ENCODE measurements at regions of chr18 and their contacts with region 1.

Region 1: GRCh38 chr18:60943297-60943696 is 389.9 kb upstream of the CDH20 start:
- DNase-seq: no peak
- ATAC-seq: no peak
- H3K4me3 ChIP-seq: peak overlapping the region in 1 of 2 experiments; percentile 10; a peak in 2 of 4 replicates
- H3K27ac ChIP-seq: no peak overlapping the region
- H3K4me1 ChIP-seq: no peaks in the 10 kb centered on the region
- H3K27me3 ChIP-seq: no peaks in the 10 kb centered on the region
- CTCF ChIP-seq: no peak

Region 2: GRCh38 chr18:60846396-60846795 is 96.9 kb before region 1 on chr18:
- CTCF ChIA-PET with region 1: no interaction called
- POLR2A ChIA-PET with region 1: no interaction called
- in situ Hi-C with region 1: no loop called
- intact Hi-C with region 1: no loop called
- DNase-seq: no peak
- ATAC-seq: no peak
- H3K4me3 ChIP-seq: no peak overlapping the region
- H3K27ac ChIP-seq: no peak overlapping the region
- H3K4me1 ChIP-seq: no peaks in the 10 kb centered on the region
- H3K27me3 ChIP-seq: no peaks in the 10 kb centered on the region
- CTCF ChIP-seq: no peak

Region 3: GRCh38 chr18:60892850-60893249 is 50.4 kb before region 1 on chr18:
- CTCF ChIA-PET with region 1: no interaction called
- POLR2A ChIA-PET with region 1: no interaction called
- in situ Hi-C with region 1: no loop called
- intact Hi-C with region 1: loop called (anchors 10 kb)
- DNase-seq: no peak
- ATAC-seq: no peak
- H3K4me3 ChIP-seq: no peak overlapping the region
- H3K27ac ChIP-seq: no peak overlapping the region
- H3K4me1 ChIP-seq: no peaks in the 10 kb centered on the region
- H3K27me3 ChIP-seq: no peaks in the 10 kb centered on the region
- CTCF ChIP-seq: no peak

Region 4: DNA sequence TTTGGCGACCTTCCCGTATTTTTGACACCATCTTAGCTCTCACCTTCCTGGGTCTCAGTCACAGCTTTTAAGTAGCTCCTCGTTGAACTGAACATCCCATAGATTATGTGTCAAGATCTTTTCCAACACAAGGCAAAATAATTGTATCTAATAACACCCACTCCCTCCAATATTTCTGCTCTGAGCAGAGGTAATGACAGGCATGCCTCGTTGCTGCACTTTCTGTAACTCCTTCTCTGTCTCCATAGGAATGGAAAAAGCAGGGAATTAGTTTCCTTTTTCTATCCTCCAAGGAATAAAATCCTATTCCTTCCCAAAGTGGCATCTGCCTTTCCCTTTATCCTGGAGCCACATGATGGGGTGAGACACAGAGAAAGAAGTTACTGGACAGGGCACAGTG is 215.9 kb after region 1 on chr18:
- CTCF ChIA-PET with region 1: no interaction called
- POLR2A ChIA-PET with region 1: interaction called, 10 read pairs
- in situ Hi-C with region 1: no loop called
- intact Hi-C with region 1: no loop called
- DNase-seq: no peak
- ATAC-seq: no peak
- H3K4me3 ChIP-seq: no peak overlapping the region
- H3K27ac ChIP-seq: no peak overlapping the region
- H3K4me1 ChIP-seq: no peaks in the 10 kb centered on the region
- H3K27me3 ChIP-seq: no peaks in the 10 kb centered on the region
- CTCF ChIP-seq: no peak

Region 5: DNA sequence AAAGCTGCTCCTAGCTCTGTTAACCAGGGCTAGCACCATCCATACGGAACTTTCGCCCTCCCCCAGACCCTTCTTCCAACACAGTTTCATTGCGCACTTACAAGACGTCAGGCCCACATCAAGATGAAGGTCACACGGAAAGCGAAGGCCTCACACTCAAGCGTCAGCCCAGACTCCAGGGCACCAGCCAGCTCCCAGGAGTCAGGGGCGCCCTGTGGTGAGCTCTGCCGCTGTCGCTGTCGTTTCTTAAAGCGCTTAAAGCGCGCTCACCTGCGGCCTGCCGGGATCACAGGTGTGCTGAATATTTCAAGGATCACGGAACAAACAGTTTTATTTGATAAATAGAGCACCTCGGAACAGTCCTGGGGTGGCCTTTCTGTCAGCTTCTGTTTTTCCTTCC is 553.1 kb after region 1 on chr18:
- CTCF ChIA-PET with region 1: no interaction called
- POLR2A ChIA-PET with region 1: no interaction called
- in situ Hi-C with region 1: no loop called
- intact Hi-C with region 1: no loop called
- DNase-seq: no peak
- ATAC-seq: no peak
- H3K4me3 ChIP-seq: no peak overlapping the region
- H3K27ac ChIP-seq: no peak overlapping the region
- H3K4me1 ChIP-seq: no peaks in the 10 kb centered on the region
- H3K27me3 ChIP-seq: no peaks in the 10 kb centered on the region
- CTCF ChIP-seq: no peak